Prostate gland (tissue), 2 donors: ENCODE measurements at regions of chr16 and their contacts with region 1.

Region 1: GRCh38 chr16:67672739-67673662 is 6.4 kb downstream of the C16orf86 start:
- DNase-seq: peak; percentile 54
- H3K4me3 ChIP-seq: no peak overlapping the region
- H3K27ac ChIP-seq: peak overlapping the region; percentile 56 to 57
- H3K4me1 ChIP-seq: peaks cover 12% of the 10 kb centered on the region
- H3K27me3 ChIP-seq: no peaks in the 10 kb centered on the region
- CTCF ChIP-seq: peak; percentile 15 to 81 (median 54)
- POLR2A ChIP-seq: no peak

Region 2: DNA sequence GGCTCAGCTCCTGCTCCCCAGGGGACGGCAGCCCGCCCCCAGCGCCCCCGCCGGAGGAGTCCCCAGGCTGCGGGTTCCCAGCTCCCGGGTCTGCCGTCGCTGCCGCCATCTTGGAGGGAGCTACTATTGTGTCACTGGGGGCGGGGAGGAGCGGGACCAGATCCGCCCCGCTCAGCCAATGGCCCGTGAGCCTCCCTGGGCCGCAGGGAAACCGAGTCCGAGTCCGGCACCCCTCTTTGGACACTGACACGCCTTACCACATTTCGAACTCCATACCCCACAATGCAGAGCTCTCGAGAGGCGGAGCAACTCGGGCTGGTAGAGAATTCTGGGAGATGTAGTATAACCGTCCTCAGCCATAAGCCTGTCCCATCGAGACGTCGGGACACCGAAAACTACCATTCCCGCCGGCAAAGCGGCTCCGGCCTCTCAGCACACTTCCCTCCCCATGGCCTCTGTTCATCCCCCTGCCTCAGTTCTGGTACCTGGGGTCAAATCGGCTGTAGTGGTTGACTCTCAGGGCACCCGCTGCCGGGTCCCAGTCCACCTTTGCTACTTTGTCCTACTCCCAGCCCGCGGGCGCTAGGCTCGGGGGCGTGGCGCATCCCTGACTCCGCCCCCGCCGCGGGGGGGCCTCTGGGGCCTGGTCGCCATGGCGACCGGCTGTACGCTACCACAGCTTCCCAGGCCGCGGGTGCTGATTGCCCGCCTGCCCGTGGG is 133.6 kb after region 1 on chr16 and contains the starts of genes RANBP10 and TSNAXIP1:
- intact Hi-C with region 1: loop called (anchors 10 kb)
- DNase-seq: peak; percentile 98
- H3K4me3 ChIP-seq: peak within 1 kb of the TSS; percentile 94 to 98
- H3K27ac ChIP-seq: peak within 1 kb of the TSS; percentile 81 to 86
- H3K4me1 ChIP-seq: peaks cover 14% of the 10 kb centered on the region
- H3K27me3 ChIP-seq: no peaks in the 10 kb centered on the region
- CTCF ChIP-seq: peak in 1 of 4 experiments; percentile 19
- POLR2A ChIP-seq: peak; percentile 89
- total RNA-seq, gene RANBP10: 11.1 to 22.8 TPM
- total RNA-seq, gene TSNAXIP1: 2.1 to 8.0 TPM

Region 3: DNA sequence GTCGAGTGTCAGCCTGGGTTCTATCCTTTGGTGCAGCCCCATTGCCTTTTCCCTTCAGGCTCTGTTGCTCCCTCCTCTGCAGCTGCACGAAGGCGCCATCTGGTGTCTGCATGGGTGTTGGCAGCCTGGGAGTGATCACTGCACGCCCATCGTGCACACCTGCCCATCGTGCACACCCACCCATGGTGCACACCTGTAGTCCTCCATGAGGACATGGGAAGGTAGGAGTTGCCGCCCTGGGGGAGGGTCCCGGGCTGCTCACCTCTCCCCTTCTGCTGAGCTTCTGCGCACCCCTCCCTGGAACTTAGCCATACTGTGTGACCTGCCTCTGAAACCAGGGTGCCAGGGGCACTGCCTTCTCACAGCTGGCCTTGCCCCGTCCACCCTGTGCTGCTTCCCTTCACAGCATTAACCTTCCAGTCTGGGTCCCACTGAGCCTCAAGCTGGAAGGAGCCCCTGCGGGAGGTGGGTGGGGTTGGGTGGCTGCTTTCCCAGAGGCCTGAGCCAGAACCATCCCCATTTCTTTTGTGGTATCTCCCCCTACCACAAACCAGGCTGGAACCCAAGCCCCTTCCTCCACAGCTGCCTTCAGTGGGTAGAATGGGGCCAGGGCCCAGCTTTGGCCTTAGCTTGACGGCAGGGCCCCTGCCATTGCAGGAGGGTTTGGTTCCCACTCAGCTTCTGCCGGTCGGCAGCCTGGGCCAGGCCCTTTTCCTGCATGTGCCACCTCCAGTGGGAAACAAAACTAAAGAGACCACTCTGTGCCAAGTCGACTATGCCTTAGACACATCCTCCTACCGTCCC is 255.8 kb after region 1 on chr16:
- intact Hi-C with region 1: loop called (anchors 5 kb)
- DNase-seq: peak; percentile 62
- H3K4me3 ChIP-seq: no peak overlapping the region
- H3K27ac ChIP-seq: no peak overlapping the region
- H3K4me1 ChIP-seq: peaks cover 12% of the 10 kb centered on the region
- H3K27me3 ChIP-seq: no peaks in the 10 kb centered on the region
- CTCF ChIP-seq: peak; percentile 60 to 94 (median 83)
- POLR2A ChIP-seq: no peak